Activated CD8-positive, alpha-beta T cell treated with anti-CD3 and anti-CD28 coated beads for 36 hours (primary cell): ENCODE measurements at regions of chr4 and their contacts with region 1.

Region 1: GRCh38 chr4:110193822-110194761 is 4.3 kb downstream of the ELOVL6 start:
- DNase-seq: peak; percentile 91
- ATAC-seq: peak; percentile 79
- H3K4me3 Mint-ChIP-seq: peak overlapping the region; percentile 66
- H3K27ac Mint-ChIP-seq: peak overlapping the region; percentile 87
- H3K4me1 Mint-ChIP-seq: peaks cover 34% of the 10 kb centered on the region
- H3K27me3 Mint-ChIP-seq: no peaks in the 10 kb centered on the region
- CTCF ChIP-seq: no peak

Region 2: DNA sequence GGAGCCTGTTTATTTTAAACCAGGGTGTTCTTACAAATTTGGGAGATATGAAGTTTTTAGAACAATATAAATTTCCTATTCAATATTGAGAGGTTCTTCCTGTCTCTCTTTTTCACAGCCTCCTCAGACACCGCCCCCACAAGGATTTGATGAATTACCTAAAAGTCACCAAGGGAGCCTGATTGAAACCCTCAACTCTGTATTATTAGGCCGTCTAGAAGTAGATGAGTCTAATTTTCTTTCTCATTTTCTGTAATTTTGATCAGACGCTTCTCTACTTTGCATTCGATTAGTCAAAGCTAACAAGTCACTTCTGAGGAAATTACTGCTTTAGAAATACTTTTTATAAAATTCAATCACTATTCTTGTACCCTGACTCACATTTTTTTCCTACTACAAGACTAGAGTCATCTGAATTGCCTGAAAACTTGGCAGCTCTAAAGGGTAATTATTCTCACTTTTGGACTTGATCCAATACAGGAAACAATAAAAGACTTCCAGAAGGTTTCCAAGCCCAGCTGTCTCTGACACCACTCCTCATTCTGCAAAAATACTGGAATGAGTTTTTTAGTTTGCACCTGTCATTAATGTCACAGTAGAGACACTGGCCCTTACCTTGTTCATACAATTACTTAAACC is 106.9 kb before region 1 on chr4:
- CTCF ChIA-PET with region 1: no interaction called
- POLR2A ChIA-PET with region 1: interaction called, 21 read pairs
- intact Hi-C with region 1: no loop called
- DNase-seq: no peak
- ATAC-seq: peak; percentile 15
- H3K4me3 Mint-ChIP-seq: no peak overlapping the region
- H3K27ac Mint-ChIP-seq: peak overlapping the region; percentile 74
- H3K4me1 Mint-ChIP-seq: peaks cover 57% of the 10 kb centered on the region
- H3K27me3 Mint-ChIP-seq: no peaks in the 10 kb centered on the region
- CTCF ChIP-seq: no peak

Region 3: GRCh38 chr4:110165382-110166285 is 28.5 kb before region 1 on chr4:
- CTCF ChIA-PET with region 1: interaction called, 3 read pairs
- POLR2A ChIA-PET with region 1: interaction called, 20 read pairs
- intact Hi-C with region 1: loop called (anchors 2 kb)
- DNase-seq: peak; percentile 83
- ATAC-seq: peak; percentile 100
- H3K4me3 Mint-ChIP-seq: peak overlapping the region; percentile 46
- H3K27ac Mint-ChIP-seq: peak overlapping the region; percentile 99
- H3K4me1 Mint-ChIP-seq: peaks cover 28% of the 10 kb centered on the region
- H3K27me3 Mint-ChIP-seq: no peaks in the 10 kb centered on the region
- CTCF ChIP-seq: no peak

Region 4: GRCh38 chr4:110381784-110382183 is 187.7 kb after region 1 on chr4:
- CTCF ChIA-PET with region 1: no interaction called
- POLR2A ChIA-PET with region 1: no interaction called
- intact Hi-C with region 1: no loop called
- DNase-seq: no peak
- ATAC-seq: no peak
- H3K4me3 Mint-ChIP-seq: no peak overlapping the region
- H3K27ac Mint-ChIP-seq: no peak overlapping the region
- H3K4me1 Mint-ChIP-seq: no peaks in the 10 kb centered on the region
- H3K27me3 Mint-ChIP-seq: peaks cover 6% of the 10 kb centered on the region
- CTCF ChIP-seq: no peak